Breast epithelium (tissue), 4 donors: ENCODE measurements at regions of chr4 and their contacts with region 1.

Region 1: DNA sequence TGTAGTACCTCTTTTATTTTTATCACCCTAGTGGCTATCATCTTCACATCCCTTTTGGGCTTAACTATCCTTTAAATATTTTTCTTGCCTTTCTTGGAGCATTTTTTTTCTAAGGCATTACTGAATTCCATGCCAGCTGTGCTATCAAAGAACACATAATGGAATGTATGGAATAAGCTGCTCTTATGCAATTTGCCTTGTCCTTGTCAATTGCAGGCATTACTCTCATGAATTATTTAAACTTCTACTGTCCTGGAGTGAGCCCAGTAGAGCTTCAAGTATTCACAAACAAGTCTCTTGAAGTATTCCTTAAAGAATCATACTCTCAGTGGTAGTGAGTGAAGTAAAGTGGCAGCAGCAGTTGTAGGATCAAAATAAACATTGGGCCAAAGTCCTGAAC is 144.6 kb upstream of the IGFBP7 start:
- DNase-seq: no peak
- H3K4me3 ChIP-seq: no peak overlapping the region
- H3K27ac ChIP-seq: no peak overlapping the region
- H3K4me1 ChIP-seq: no peaks in the 10 kb centered on the region
- H3K27me3 ChIP-seq: no peaks in the 10 kb centered on the region
- CTCF ChIP-seq: no peak
- POLR2A ChIP-seq: no peak

Region 2: GRCh38 chr4:57303012-57303751 is 48.4 kb after region 1 on chr4:
- intact Hi-C with region 1: no loop called
- DNase-seq: no peak
- H3K4me3 ChIP-seq: no peak overlapping the region
- H3K27ac ChIP-seq: no peak overlapping the region
- H3K4me1 ChIP-seq: no peaks in the 10 kb centered on the region
- H3K27me3 ChIP-seq: no peaks in the 10 kb centered on the region
- CTCF ChIP-seq: no peak
- POLR2A ChIP-seq: no peak

Region 3: DNA sequence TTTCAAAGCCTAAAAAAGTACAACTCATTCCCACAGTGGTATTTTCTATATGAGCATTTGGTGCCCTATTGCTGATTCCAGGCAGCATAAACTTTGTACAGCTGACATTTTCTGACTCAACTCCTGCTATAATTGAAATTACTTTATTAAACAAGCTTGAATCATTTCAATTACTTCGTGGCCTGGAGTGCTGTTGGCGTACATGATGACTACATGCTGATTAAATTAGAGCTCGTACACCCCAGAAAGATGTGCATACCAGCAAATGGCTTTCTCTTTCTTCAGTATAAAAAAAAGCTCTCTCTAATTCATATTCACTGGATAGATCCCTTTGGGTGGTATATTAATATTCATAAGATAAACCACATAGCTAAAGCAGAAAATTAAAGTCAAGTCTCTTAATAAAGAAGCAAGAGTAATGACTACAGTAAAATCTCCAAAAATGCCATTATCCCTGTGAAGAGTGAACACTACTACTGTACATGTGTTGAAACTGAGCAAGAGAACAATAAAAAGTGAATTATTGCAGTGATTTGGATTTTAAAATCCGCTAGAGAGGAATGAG is 100.4 kb after region 1 on chr4:
- intact Hi-C with region 1: no loop called
- DNase-seq: no peak
- H3K4me3 ChIP-seq: no peak overlapping the region
- H3K27ac ChIP-seq: no peak overlapping the region
- H3K4me1 ChIP-seq: no peaks in the 10 kb centered on the region
- H3K27me3 ChIP-seq: no peaks in the 10 kb centered on the region
- CTCF ChIP-seq: no peak
- POLR2A ChIP-seq: no peak

Region 4: GRCh38 chr4:57488366-57489162 is 233.8 kb after region 1 on chr4:
- intact Hi-C with region 1: loop called (anchors 10 kb)
- DNase-seq: no peak
- H3K4me3 ChIP-seq: no peak overlapping the region
- H3K27ac ChIP-seq: no peak overlapping the region
- H3K4me1 ChIP-seq: no peaks in the 10 kb centered on the region
- H3K27me3 ChIP-seq: no peaks in the 10 kb centered on the region
- CTCF ChIP-seq: no peak
- POLR2A ChIP-seq: no peak

Region 5: GRCh38 chr4:58617231-58617630 is 1362.5 kb after region 1 on chr4:
- intact Hi-C with region 1: no loop called
- DNase-seq: no peak
- H3K4me3 ChIP-seq: no peak overlapping the region
- H3K27ac ChIP-seq: no peak overlapping the region
- H3K4me1 ChIP-seq: no peaks in the 10 kb centered on the region
- H3K27me3 ChIP-seq: no peaks in the 10 kb centered on the region
- CTCF ChIP-seq: no peak
- POLR2A ChIP-seq: no peak